MCF 10A (cell line): ENCODE measurements at regions of chr18 and their contacts with region 1.

Region 1: GRCh38 chr18:40159141-40160017 is 1795.7 kb upstream of the PIK3C3 start:
- DNase-seq: peak; percentile 62
- H3K4me3 Mint-ChIP-seq: no peak overlapping the region
- H3K27ac Mint-ChIP-seq: no peak overlapping the region
- H3K4me1 Mint-ChIP-seq: peaks cover 13% of the 10 kb centered on the region
- H3K27me3 Mint-ChIP-seq: no peaks in the 10 kb centered on the region
- CTCF ChIP-seq: peak; percentile 55

Region 2: DNA sequence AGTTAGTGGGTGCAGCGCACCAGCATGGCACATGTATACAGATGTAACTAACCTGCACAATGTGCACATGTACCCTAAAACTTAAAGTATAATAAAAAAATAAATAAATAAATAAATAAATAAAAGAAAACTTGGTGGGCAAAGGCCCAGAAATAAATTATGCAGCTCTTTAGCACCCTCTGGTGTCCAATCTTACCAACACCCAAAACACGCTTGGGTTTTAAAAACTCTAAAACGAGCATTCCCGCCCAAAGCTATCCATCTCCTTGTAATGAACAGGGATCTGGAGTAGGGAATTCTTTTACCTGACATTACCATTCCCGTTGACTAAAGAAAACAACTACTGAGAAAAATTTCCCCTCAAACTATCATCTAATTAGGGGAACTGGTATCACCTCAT is 587.9 kb before region 1 on chr18:
- CTCF ChIA-PET with region 1: no interaction called
- POLR2A ChIA-PET with region 1: no interaction called
- intact Hi-C with region 1: loop called (anchors 10 kb)
- DNase-seq: peak; percentile 30
- H3K4me3 Mint-ChIP-seq: no peak overlapping the region
- H3K27ac Mint-ChIP-seq: no peak overlapping the region
- H3K4me1 Mint-ChIP-seq: no peaks in the 10 kb centered on the region
- H3K27me3 Mint-ChIP-seq: no peaks in the 10 kb centered on the region
- CTCF ChIP-seq: peak; percentile 35

Region 3: GRCh38 chr18:39841482-39842365 is 317.7 kb before region 1 on chr18:
- CTCF ChIA-PET with region 1: interaction called, 13 read pairs
- POLR2A ChIA-PET with region 1: interaction called, 6 read pairs
- intact Hi-C with region 1: no loop called
- DNase-seq: peak; percentile 67
- H3K4me3 Mint-ChIP-seq: peak overlapping the region; percentile 83
- H3K27ac Mint-ChIP-seq: no peak overlapping the region
- H3K4me1 Mint-ChIP-seq: peaks cover 4% of the 10 kb centered on the region
- H3K27me3 Mint-ChIP-seq: no peaks in the 10 kb centered on the region
- CTCF ChIP-seq: peak; percentile 38

Region 4: GRCh38 chr18:40058811-40059570 is 100.4 kb before region 1 on chr18:
- CTCF ChIA-PET with region 1: no interaction called
- POLR2A ChIA-PET with region 1: no interaction called
- intact Hi-C with region 1: no loop called
- DNase-seq: no peak
- H3K4me3 Mint-ChIP-seq: no peak overlapping the region
- H3K27ac Mint-ChIP-seq: no peak overlapping the region
- H3K4me1 Mint-ChIP-seq: peaks cover 5% of the 10 kb centered on the region
- H3K27me3 Mint-ChIP-seq: no peaks in the 10 kb centered on the region
- CTCF ChIP-seq: no peak

Region 5: DNA sequence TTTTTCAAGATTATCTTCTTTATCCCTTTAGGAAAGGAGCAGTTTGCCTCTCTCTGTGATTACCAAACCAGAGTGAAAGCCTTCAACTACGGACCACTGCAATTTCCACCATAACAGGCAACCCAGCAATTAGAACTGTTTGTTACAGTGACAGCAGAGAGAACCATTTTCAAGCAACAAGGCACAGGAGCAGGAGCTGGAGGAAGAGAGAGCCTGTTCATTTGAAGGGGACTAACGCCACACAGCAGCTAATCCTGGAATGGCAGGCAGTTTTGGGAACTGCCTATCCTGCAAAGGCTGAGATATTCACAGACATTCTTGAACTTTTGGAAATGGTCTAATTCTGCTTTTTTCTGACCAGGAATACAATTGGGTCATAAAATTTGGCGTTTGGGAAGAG is 253.8 kb after region 1 on chr18:
- CTCF ChIA-PET with region 1: interaction called, 4 read pairs
- POLR2A ChIA-PET with region 1: no interaction called
- intact Hi-C with region 1: loop called (anchors 10 kb)
- DNase-seq: peak; percentile 52
- H3K4me3 Mint-ChIP-seq: no peak overlapping the region
- H3K27ac Mint-ChIP-seq: no peak overlapping the region
- H3K4me1 Mint-ChIP-seq: peaks cover 12% of the 10 kb centered on the region
- H3K27me3 Mint-ChIP-seq: no peaks in the 10 kb centered on the region
- CTCF ChIP-seq: peak; percentile 53

Region 6: DNA sequence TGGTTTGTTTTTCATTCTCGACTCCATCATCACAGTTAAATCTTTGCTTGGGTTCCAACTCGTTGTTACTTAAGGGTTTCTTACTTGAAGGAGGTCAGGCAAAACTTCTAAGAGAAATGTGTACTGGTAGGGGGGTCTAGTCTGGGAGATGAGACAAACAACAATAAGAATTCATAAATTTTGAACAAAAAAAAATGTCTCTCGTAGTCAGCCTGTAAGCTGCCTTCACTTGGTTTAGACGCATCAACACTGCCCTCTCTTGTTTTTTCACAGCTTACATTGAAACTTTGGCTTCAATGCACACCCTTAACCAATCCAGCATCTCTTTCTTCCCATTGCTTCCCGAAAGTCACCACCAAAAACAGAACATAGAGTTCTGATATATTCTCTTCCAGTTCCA is 1219.2 kb after region 1 on chr18:
- CTCF ChIA-PET with region 1: no interaction called
- POLR2A ChIA-PET with region 1: no interaction called
- intact Hi-C with region 1: loop called (anchors 10 kb)
- DNase-seq: peak; percentile 54
- H3K4me3 Mint-ChIP-seq: no peak overlapping the region
- H3K27ac Mint-ChIP-seq: no peak overlapping the region
- H3K4me1 Mint-ChIP-seq: no peaks in the 10 kb centered on the region
- H3K27me3 Mint-ChIP-seq: no peaks in the 10 kb centered on the region
- CTCF ChIP-seq: peak; percentile 55